A673 (cell line): ENCODE measurements at regions of chr10 and their contacts with region 1.

Region 1: GRCh38 chr10:91409869-91410637 is at the start of gene HECTD2:
- DNase-seq: peak; percentile 88
- H3K4me3 ChIP-seq: peak within 1 kb of the TSS; percentile 80
- H3K27ac ChIP-seq: peak within 1 kb of the TSS; percentile 99
- H3K4me1 ChIP-seq: peaks cover 41% of the 10 kb centered on the region
- H3K27me3 ChIP-seq: no peaks in the 10 kb centered on the region
- CTCF ChIP-seq: no peak; the same call in 1 of the 2 replicates
- total RNA-seq, gene HECTD2: 15.1 and 20.9 TPM in 2 replicates

Region 2: DNA sequence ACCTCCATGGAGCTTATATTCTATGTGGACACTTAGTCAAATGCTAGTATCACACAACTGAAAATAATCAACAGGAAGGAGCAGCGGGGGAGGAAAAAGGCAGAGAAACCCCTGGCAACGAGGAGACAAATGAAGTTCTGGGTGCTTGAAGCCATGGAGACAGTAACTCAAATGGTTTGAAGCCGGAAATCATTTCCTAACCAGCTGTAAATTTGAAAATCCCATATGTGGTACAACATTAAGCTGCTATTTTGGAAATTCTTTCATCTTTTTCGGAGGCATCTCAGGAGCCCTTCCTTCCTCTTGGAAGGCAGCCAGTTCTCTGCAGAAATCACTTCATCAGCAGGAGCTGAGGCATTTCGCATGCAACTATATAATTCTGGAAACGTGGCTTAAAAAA is 131.4 kb after region 1 on chr10:
- CTCF ChIA-PET with region 1: no interaction called
- POLR2A ChIA-PET with region 1: no interaction called
- intact Hi-C with region 1: loop called (anchors 2 kb)
- DNase-seq: peak; percentile 97
- H3K4me3 ChIP-seq: no peak overlapping the region
- H3K27ac ChIP-seq: peak overlapping the region; percentile 85
- H3K4me1 ChIP-seq: peaks cover 28% of the 10 kb centered on the region
- H3K27me3 ChIP-seq: no peaks in the 10 kb centered on the region
- CTCF ChIP-seq: no peak

Region 3: GRCh38 chr10:91797874-91798648 is 388.0 kb after region 1 on chr10 and contains the start of gene TNKS2:
- CTCF ChIA-PET with region 1: no interaction called
- POLR2A ChIA-PET with region 1: no interaction called
- intact Hi-C with region 1: loop called (anchors 5 kb)
- DNase-seq: peak; percentile 98
- H3K4me3 ChIP-seq: peak within 1 kb of the TSS; percentile 68
- H3K27ac ChIP-seq: peak within 1 kb of the TSS; percentile 93
- H3K4me1 ChIP-seq: peaks cover 11% of the 10 kb centered on the region
- H3K27me3 ChIP-seq: no peaks in the 10 kb centered on the region
- CTCF ChIP-seq: no peak
- total RNA-seq, gene TNKS2: 38.1 and 39.4 TPM in 2 replicates